CD4-positive, alpha-beta T cell (primary cell): ENCODE measurements at regions of chr14 and their contacts with region 1.

Region 1: DNA sequence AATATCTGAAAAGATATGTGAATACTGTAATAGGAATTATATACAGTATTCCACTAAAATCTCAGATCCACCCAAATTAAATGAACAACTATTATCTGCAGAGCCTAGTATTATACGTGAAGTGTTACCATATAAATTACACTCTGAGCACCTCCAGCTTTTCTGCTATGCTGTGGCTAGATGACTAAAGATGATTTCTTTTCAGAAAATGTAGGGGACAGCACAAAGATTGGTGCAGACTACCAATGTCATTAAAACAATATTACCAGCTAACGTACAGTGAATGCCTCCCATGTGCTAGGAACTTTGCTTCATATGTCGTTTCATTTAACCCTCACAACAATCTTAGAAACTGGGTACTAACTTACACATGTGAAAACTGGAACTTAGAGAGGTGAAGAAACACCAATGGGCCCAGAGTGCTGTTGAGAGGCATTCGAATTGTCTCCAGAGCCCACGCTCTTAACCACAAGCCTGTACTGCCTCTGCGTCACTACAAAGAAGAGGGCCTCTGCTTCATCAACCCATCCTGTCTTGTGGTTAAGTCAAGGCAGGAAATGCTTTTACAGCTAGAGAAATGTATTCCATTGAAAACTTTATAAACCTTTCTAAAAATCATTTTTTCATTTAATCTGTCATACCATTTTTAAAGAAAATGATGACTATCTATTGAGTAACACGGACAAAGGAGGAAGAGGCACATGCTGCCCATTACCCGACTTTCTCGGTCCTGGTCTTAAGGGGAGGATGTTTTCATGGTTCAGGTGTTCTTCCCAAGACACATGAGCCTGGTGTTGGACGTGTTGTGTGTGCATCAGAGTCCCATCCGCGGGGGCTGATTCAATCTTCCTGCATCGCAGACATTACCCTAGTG is 1.3 kb downstream of the GPR65 start:
- DNase-seq: peak; percentile 43 to 93 (median 52)
- ATAC-seq: peak; percentile 90
- H3K4me3 ChIP-seq: peak overlapping the region; percentile 61
- H3K4me3 Mint-ChIP-seq: peak overlapping the region; percentile 93
- H3K27ac ChIP-seq: peak overlapping the region; percentile 74 to 82
- H3K27ac Mint-ChIP-seq: peak overlapping the region; percentile 97
- H3K4me1 ChIP-seq: peaks cover 25% of the 10 kb centered on the region
- H3K4me1 Mint-ChIP-seq: peaks cover 84% of the 10 kb centered on the region
- H3K27me3 ChIP-seq: no peaks in the 10 kb centered on the region
- H3K27me3 Mint-ChIP-seq: no peaks in the 10 kb centered on the region
- CTCF ChIP-seq: no peak

Region 2: GRCh38 chr14:87952307-87953094 is 53.7 kb before region 1 on chr14:
- CTCF ChIA-PET with region 1: no interaction called
- POLR2A ChIA-PET with region 1: interaction called, 13 read pairs
- intact Hi-C with region 1: no loop called
- DNase-seq: peak in 4 of 14 experiments; percentile 3 to 81 (median 37)
- ATAC-seq: peak; percentile 71
- H3K4me3 ChIP-seq: peak overlapping the region; percentile 13
- H3K4me3 Mint-ChIP-seq: peak overlapping the region; percentile 59
- H3K27ac ChIP-seq: peak overlapping the region; percentile 32 to 64
- H3K27ac Mint-ChIP-seq: peak overlapping the region; percentile 93
- H3K4me1 ChIP-seq: peaks cover 2% of the 10 kb centered on the region
- H3K4me1 Mint-ChIP-seq: peaks cover 60% of the 10 kb centered on the region
- H3K27me3 ChIP-seq: no peaks in the 10 kb centered on the region
- H3K27me3 Mint-ChIP-seq: no peaks in the 10 kb centered on the region
- CTCF ChIP-seq: no peak

Region 3: DNA sequence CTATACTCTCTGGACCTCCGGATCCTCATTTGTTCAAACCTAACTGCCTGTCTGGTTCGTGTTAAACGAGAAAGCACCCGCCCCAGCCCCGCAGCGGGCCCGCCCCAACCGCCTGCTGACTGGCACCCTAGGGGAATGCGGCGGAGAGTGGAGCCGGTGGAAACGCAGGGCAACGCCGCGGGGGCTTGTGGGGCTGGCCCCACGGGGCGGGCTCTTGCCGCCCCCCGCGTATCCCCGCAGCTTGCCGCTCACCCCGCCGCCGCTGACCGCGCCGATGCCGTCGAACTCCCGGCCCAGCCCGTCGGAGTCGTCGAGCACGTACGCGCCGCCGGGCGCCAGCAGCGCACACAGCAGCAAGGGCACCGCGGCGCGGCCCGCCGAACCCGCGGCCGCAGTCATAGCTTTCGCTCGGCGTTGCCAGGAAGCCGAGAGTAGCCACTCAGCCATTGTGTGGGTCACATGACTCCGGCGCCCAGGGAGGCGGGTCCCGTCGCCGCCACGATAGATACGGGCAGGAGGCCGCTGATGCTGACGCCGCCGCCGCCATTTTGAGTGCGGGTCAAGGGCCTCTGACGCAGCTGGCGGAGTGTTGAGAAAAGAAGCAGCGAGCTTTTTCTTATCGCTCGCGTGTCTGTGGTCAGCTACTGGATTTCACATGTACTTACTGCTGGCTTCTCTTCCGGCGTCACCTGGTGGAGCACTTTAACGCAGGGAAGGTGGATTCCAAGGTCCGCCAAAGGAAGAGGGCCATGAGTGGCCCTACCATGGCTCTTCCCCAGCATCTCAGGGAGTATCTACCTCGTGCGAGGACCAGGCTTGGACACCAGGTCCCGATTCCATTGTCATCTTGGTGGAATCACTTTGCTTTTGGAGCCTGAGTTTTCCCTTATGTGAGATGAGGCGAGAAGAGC is 13.2 kb before region 1 on chr14 and contains the start of gene GALC:
- CTCF ChIA-PET with region 1: interaction called, 12 read pairs
- POLR2A ChIA-PET with region 1: interaction called, 245 read pairs
- intact Hi-C with region 1: loop called (anchors 1 kb)
- DNase-seq: peak; percentile 92 to 98 (median 94)
- ATAC-seq: peak; percentile 85
- H3K4me3 ChIP-seq: peak within 1 kb of the TSS; percentile 66
- H3K4me3 Mint-ChIP-seq: peak within 1 kb of the TSS; percentile 92
- H3K27ac ChIP-seq: peak within 1 kb of the TSS; percentile 88 to 95
- H3K27ac Mint-ChIP-seq: peak within 1 kb of the TSS; percentile 99
- H3K4me1 ChIP-seq: peaks cover 41% of the 10 kb centered on the region
- H3K4me1 Mint-ChIP-seq: peaks cover 76% of the 10 kb centered on the region
- H3K27me3 ChIP-seq: no peaks in the 10 kb centered on the region
- H3K27me3 Mint-ChIP-seq: no peaks in the 10 kb centered on the region
- CTCF ChIP-seq: no peak
- total RNA-seq, gene GALC: 14.7 to 14.9 TPM

Region 4: DNA sequence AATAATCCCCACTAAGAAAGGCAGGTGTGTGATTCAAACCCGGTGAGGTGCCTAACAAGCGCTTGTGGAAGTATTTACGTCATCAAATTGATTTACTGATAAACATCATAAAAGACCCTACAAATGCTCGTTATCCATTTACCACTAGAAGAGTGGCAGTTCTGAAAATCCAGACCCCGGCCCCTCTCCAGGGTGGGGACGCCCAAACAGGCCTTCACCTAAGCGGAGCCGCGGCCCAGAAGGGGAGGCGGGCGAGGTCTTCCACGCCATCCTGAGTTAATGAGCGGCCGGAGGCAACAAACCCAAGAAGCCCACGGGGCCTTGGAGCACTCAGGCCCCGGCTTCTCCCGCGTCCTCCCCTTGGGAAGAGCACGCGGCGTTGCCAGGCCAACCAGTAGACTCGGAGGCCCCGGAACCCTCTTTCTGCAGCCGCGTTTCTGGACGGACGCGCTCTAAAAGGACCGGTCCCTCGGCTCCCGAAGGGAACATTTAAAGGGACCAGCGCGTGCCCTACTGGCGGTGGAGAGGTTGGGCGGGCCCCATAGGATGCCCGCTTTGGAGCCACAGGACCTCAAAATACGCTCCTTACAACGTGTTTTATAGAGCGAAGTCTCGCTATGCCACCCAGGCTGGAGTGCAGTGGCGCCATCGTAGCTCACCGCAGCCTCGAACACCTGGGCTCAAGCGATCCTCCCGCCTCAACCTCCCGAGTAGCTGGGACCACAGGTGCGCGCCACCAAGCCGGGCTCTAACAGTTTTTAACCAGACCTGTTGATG is 545.1 kb after region 1 on chr14:
- CTCF ChIA-PET with region 1: no interaction called
- POLR2A ChIA-PET with region 1: no interaction called
- intact Hi-C with region 1: loop called in 1 of 2 experiments (anchors 5 kb)
- DNase-seq: peak in 12 of 14 experiments; percentile 7 to 60 (median 34)
- ATAC-seq: peak; percentile 26
- H3K4me3 ChIP-seq: peak overlapping the region; percentile 57
- H3K4me3 Mint-ChIP-seq: peak overlapping the region; percentile 71
- H3K27ac ChIP-seq: no peak overlapping the region
- H3K27ac Mint-ChIP-seq: no peak overlapping the region
- H3K4me1 ChIP-seq: peaks cover 21% of the 10 kb centered on the region
- H3K4me1 Mint-ChIP-seq: peaks cover 31% of the 10 kb centered on the region
- H3K27me3 ChIP-seq: peaks cover 29 to 50% of the 10 kb centered on the region in 2 experiments
- H3K27me3 Mint-ChIP-seq: peaks cover 69% of the 10 kb centered on the region
- CTCF ChIP-seq: no peak

Region 5: DNA sequence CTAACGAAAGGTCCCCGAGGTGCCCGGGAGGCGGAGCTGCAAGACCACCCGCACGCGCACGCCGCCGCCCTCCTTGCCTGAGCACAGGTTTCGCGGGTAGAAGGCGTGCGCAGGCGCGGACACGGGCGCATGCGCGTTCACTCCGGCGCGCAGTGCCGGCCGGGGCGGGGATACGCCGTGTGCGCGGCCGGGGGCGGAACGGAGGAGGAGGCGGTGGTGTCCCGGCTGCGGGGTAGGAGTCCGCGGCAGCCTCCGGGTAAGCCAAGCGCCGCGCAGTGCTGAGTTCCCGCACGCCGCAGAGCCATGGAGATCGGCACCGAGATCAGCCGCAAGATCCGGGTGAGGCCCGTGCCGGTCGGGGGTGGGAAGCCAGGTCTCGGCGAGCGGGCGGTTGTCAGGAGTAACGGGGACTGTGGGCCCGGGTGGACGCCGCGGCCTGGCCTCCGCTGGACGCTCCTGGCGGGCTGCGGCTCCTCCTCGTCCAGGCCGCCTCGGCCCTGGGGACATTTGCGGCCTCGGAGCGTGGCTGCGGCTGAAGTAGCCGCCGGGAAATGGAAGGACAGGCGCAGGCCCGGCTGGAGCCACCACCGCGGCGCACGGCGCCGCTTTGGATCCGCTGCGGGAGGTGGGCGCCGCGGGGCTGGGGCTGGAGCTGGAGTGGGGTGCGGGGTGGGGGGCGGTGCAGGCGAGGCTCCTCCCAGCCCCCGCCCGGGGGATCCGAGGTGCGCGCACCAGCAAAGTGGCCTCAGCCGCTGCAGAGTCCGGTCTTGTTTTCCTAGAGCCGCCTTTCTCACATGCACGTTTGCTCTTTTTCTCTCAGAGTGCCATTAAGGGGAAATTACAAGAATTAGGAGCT is 556.8 kb after region 1 on chr14 and contains the start of gene ZC3H14:
- CTCF ChIA-PET with region 1: no interaction called
- POLR2A ChIA-PET with region 1: no interaction called
- intact Hi-C with region 1: loop called (anchors 5 kb)
- DNase-seq: peak; percentile 73 to 95 (median 84)
- ATAC-seq: peak; percentile 96
- H3K4me3 ChIP-seq: peak within 1 kb of the TSS; percentile 77
- H3K4me3 Mint-ChIP-seq: peak within 1 kb of the TSS; percentile 97
- H3K27ac ChIP-seq: peak within 1 kb of the TSS in 1 of 2 donors; percentile 35
- H3K27ac Mint-ChIP-seq: peak within 1 kb of the TSS; percentile 67
- H3K4me1 ChIP-seq: peaks cover 13% of the 10 kb centered on the region
- H3K4me1 Mint-ChIP-seq: peaks cover 37% of the 10 kb centered on the region
- H3K27me3 ChIP-seq: no peaks in the 10 kb centered on the region
- H3K27me3 Mint-ChIP-seq: peaks cover 8% of the 10 kb centered on the region
- CTCF ChIP-seq: no peak
- total RNA-seq, gene ZC3H14: 36.5 to 40.2 TPM

Region 6: DNA sequence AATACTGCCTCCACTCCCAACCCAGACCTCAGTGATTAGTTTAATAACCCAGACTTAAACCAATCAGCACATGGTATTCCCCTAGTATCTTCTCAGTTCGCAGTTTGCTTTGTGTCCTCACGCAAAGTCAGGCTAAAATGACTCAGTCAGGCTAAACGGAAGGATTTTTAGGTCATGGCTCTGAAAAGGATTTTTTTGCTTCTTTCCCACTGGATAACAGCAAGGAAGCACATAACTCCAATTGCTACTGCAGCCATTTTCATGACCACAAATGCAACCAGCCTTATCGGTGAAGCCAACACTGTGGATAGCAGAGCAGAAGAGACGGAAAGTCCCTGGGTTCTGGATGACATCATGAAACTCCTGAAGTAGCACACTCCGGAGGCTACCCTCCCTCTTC is 624.4 kb after region 1 on chr14:
- CTCF ChIA-PET with region 1: no interaction called
- POLR2A ChIA-PET with region 1: no interaction called
- intact Hi-C with region 1: no loop called
- DNase-seq: no peak
- ATAC-seq: no peak
- H3K4me3 ChIP-seq: no peak overlapping the region
- H3K4me3 Mint-ChIP-seq: no peak overlapping the region
- H3K27ac ChIP-seq: no peak overlapping the region
- H3K27ac Mint-ChIP-seq: no peak overlapping the region
- H3K4me1 ChIP-seq: no peaks in the 10 kb centered on the region
- H3K4me1 Mint-ChIP-seq: no peaks in the 10 kb centered on the region
- H3K27me3 ChIP-seq: no peaks in the 10 kb centered on the region
- H3K27me3 Mint-ChIP-seq: no peaks in the 10 kb centered on the region
- CTCF ChIP-seq: no peak

Region 7: DNA sequence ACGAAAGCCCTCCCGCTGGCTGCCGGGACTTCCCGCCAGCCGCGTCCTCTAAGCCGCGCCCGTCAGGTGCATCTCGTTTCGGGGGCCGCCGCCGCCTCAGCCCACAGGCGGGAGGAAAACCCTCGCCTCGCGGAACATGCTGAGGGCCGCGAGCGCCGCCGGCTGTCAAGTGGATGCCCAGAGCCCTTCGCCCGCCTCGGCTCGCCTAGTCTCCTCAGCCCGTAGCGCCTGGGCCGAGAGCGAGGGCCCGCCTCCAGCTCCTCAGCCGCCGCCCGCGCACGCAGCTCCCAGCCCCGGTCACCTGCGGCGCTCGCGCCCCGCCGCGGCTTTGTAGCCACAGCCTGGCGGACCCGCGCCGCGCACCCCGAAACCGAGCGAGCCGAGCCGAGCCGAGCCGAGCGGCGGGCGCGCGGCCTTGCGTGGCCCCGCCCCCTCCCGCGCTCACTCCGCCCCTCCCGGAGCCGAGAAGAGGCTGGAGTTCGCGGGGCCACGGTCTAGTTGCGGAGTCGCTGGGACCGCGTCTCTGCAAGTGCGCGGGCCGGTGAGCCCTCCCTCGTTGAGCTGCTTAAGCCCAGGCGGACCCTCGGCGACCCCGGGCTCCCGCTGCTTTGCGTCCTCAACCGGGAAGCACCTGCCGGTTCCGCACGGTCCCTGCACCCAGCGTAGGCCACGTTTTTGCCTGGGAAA is 786.5 kb after region 1 on chr14 and contains the start of gene EML5:
- CTCF ChIA-PET with region 1: no interaction called
- POLR2A ChIA-PET with region 1: no interaction called
- intact Hi-C with region 1: loop called in 1 of 2 experiments (anchors 5 kb)
- DNase-seq: peak; percentile 64 to 93 (median 80)
- ATAC-seq: peak; percentile 87
- H3K4me3 ChIP-seq: peak within 1 kb of the TSS; percentile 89
- H3K4me3 Mint-ChIP-seq: peak within 1 kb of the TSS; percentile 95
- H3K27ac ChIP-seq: peak within 1 kb of the TSS in 1 of 2 donors; percentile 61
- H3K27ac Mint-ChIP-seq: peak within 1 kb of the TSS; percentile 85
- H3K4me1 ChIP-seq: peaks cover 16% of the 10 kb centered on the region
- H3K4me1 Mint-ChIP-seq: peaks cover 20% of the 10 kb centered on the region
- H3K27me3 ChIP-seq: peaks cover 0 to 3% of the 10 kb centered on the region in 2 experiments
- H3K27me3 Mint-ChIP-seq: no peaks in the 10 kb centered on the region
- CTCF ChIP-seq: peak; percentile 24
- total RNA-seq, gene EML5: 2.8 to 3.1 TPM